ENCODE measurements at regions of chr1 and their contacts with region 1.

Region 1: GRCh38 chr1:35030756-35031446 is 844 bp downstream of the ZMYM6 start:
- DNase-seq: peak; percentile 22 to 55
- ATAC-seq: peak; percentile 22 to 55 (median 24)
- H3K4me3 ChIP-seq: peak overlapping the region; percentile 55
- H3K4me3 Mint-ChIP-seq: peak overlapping the region; percentile 99
- H3K27ac ChIP-seq: peak overlapping the region; percentile 74
- H3K27ac Mint-ChIP-seq: peak overlapping the region; percentile 93 to 94
- H3K4me1 ChIP-seq: peaks cover 21% of the 10 kb centered on the region
- H3K4me1 Mint-ChIP-seq: peaks cover 43 to 47% of the 10 kb centered on the region in 2 donors
- H3K27me3 ChIP-seq: no peaks in the 10 kb centered on the region
- H3K27me3 Mint-ChIP-seq: no peaks in the 10 kb centered on the region
- CTCF ChIP-seq: no peak

Region 2: GRCh38 chr1:34965597-34965996 is 65.3 kb before region 1 on chr1:
- intact Hi-C with region 1: no loop called
- DNase-seq: no peak
- ATAC-seq: no peak
- H3K4me3 ChIP-seq: no peak overlapping the region
- H3K4me3 Mint-ChIP-seq: no peak overlapping the region
- H3K27ac ChIP-seq: no peak overlapping the region
- H3K27ac Mint-ChIP-seq: no peak overlapping the region
- H3K4me1 ChIP-seq: peaks cover 16% of the 10 kb centered on the region
- H3K4me1 Mint-ChIP-seq: peaks cover 0 to 10% of the 10 kb centered on the region in 2 donors
- H3K27me3 ChIP-seq: no peaks in the 10 kb centered on the region
- H3K27me3 Mint-ChIP-seq: no peaks in the 10 kb centered on the region
- CTCF ChIP-seq: no peak

Region 3: GRCh38 chr1:34984793-34985608 is 45.9 kb before region 1 on chr1 and contains the start of gene TMEM35B:
- intact Hi-C with region 1: loop called (anchors 1 kb)
- DNase-seq: peak; percentile 77 to 85
- ATAC-seq: peak; percentile 96 to 97 (median 97)
- H3K4me3 ChIP-seq: peak within 1 kb of the TSS; percentile 90
- H3K4me3 Mint-ChIP-seq: peak within 1 kb of the TSS; percentile 97
- H3K27ac ChIP-seq: peak within 1 kb of the TSS; percentile 91
- H3K27ac Mint-ChIP-seq: peak within 1 kb of the TSS; percentile 87 to 90
- H3K4me1 ChIP-seq: peaks cover 27% of the 10 kb centered on the region
- H3K4me1 Mint-ChIP-seq: peaks cover 18 to 45% of the 10 kb centered on the region in 2 donors
- H3K27me3 ChIP-seq: no peaks in the 10 kb centered on the region
- H3K27me3 Mint-ChIP-seq: no peaks in the 10 kb centered on the region
- CTCF ChIP-seq: peak; percentile 29
- total RNA-seq, gene TMEM35B: 4.1 to 18.5 (median 10.5) TPM

Region 4: GRCh38 chr1:35079003-35079930 is 48.4 kb after region 1 on chr1 and contains the start of gene ZMYM1:
- intact Hi-C with region 1: loop called (anchors 1 kb)
- DNase-seq: peak; percentile 77 to 86
- ATAC-seq: peak; percentile 87 to 89 (median 88)
- H3K4me3 ChIP-seq: peak within 1 kb of the TSS; percentile 67
- H3K4me3 Mint-ChIP-seq: peak within 1 kb of the TSS; percentile 97
- H3K27ac ChIP-seq: peak within 1 kb of the TSS; percentile 86
- H3K27ac Mint-ChIP-seq: peak within 1 kb of the TSS; percentile 98 to 100
- H3K4me1 ChIP-seq: peaks cover 13% of the 10 kb centered on the region
- H3K4me1 Mint-ChIP-seq: peaks cover 32 to 36% of the 10 kb centered on the region in 2 donors
- H3K27me3 ChIP-seq: no peaks in the 10 kb centered on the region
- H3K27me3 Mint-ChIP-seq: peaks cover 0 to under 1% of the 10 kb centered on the region in 2 donors
- CTCF ChIP-seq: no peak
- total RNA-seq, gene ZMYM1: 15.0 to 19.1 (median 19.1) TPM

Measured in natural killer cell (primary cell).